Aorta (tissue), 5 donors: ENCODE measurements at regions of chr3 and their contacts with region 1.

Region 1: GRCh38 chr3:6807967-6808588 is 52.8 kb upstream of the GRM7 start:
- DNase-seq: no peak
- ATAC-seq: no peak
- H3K4me3 ChIP-seq: no peak overlapping the region
- H3K27ac ChIP-seq: no peak overlapping the region
- H3K4me1 ChIP-seq: no peaks in the 10 kb centered on the region
- H3K27me3 ChIP-seq: no peaks in the 10 kb centered on the region

Region 2: GRCh38 chr3:6854184-6854583 is 46.1 kb after region 1 on chr3:
- intact Hi-C with region 1: loop called in 1 of 2 experiments (anchors 2 kb)
- DNase-seq: no peak
- ATAC-seq: no peak
- H3K4me3 ChIP-seq: no peak overlapping the region
- H3K27ac ChIP-seq: no peak overlapping the region
- H3K4me1 ChIP-seq: no peaks in the 10 kb centered on the region
- H3K27me3 ChIP-seq: no peaks in the 10 kb centered on the region